Calu3 (cell line): ENCODE measurements at regions of chr7 and their contacts with region 1.

Region 1: DNA sequence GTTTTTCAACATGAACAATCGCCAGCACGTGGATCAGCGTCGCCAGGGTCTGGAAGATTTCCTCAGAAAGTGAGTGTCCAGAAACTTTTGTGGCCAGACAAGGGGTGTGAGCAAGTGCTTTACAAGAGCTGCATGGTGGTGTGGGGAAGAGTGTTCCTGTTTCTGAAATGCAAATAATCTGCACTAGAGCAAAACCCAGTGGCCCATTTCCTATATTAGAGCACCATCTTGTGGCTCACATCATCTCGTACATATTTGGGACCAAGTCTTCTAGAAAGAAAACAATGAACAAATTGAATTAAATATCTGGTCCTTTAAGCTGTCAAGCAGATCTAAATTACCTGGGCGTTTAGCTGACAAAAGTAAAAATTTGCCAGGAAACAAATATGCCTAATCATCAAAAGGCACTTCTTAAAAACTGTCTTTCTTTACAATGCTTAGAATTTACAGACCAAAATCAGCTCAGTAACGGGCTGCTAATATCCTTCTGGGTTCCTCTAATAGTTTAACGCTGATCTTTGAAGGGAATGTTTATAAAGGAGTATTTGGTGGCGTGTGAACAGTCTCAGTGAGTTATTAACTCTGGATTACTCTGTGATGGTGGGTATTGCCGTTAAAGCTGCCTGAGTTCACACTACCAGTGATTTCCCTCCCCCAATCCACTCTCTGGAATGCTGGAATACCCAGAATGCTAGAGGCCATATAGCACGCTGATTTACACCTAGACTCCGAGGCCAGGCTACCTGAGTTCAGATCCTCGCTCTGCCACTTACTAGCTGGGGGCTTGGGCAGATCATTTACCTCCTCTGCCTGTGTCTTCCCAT is 73.6 kb downstream of the SNX10 start:
- DNase-seq: peak; percentile 73
- H3K4me3 Mint-ChIP-seq: peak overlapping the region; percentile 10
- H3K27ac Mint-ChIP-seq: peak overlapping the region; percentile 54
- H3K4me1 Mint-ChIP-seq: peaks cover 44% of the 10 kb centered on the region
- H3K27me3 Mint-ChIP-seq: no peaks in the 10 kb centered on the region
- CTCF ChIP-seq: peak; percentile 85

Region 2: DNA sequence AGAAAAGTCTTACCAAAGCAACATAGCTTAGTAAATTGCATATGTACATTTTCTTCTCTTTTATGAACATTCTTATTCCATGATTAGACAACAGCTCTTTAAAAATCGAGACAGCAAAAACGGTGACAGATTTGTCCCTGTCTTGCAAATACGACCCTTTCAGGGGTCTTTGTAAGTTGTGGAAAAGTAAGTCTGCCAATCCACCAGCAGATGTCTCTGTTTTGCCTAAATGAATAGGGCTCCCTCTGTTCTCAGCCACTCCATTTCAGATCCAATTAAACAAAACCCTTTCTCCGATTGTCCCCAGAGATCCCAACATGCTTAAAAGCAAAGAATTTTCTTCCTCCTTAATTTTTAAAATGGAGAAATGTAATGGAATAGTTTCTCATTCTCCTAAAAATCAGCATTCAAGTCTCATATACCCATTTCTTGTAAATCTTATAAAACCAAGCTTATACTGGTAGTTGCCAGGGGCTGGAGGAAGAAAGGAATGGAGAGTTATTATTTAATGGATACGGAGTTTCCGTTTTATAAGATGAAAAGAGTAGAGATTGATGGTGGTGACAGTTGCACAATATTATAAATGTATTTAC is 274.3 kb before region 1 on chr7:
- CTCF ChIA-PET with region 1: interaction called, 9 read pairs
- intact Hi-C with region 1: loop called (anchors 1 kb)
- DNase-seq: peak; percentile 27
- H3K4me3 Mint-ChIP-seq: no peak overlapping the region
- H3K27ac Mint-ChIP-seq: no peak overlapping the region
- H3K4me1 Mint-ChIP-seq: peaks cover 23% of the 10 kb centered on the region
- H3K27me3 Mint-ChIP-seq: no peaks in the 10 kb centered on the region
- CTCF ChIP-seq: peak; percentile 87

Region 3: DNA sequence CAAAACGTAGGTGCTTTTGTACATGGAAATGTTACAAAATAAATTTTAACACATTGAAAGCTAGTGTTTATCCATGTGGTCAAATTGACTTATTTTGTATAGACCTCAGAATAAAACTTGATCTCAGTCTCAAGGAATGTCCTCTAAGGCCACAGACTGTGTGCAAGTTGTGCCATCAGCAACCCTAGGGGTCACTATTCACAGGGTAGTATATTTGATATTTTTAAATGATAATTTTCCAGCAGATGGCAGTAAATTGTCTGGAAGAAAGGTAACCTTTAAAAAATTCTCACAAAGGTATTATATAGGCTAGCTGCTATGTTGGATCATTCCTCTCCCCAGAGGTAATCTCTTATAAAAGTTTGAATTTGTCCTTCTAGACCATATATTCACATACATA is 86.5 kb before region 1 on chr7:
- CTCF ChIA-PET with region 1: interaction called, 7 read pairs
- intact Hi-C with region 1: loop called (anchors 1 kb)
- DNase-seq: peak; percentile 13
- H3K4me3 Mint-ChIP-seq: no peak overlapping the region
- H3K27ac Mint-ChIP-seq: no peak overlapping the region
- H3K4me1 Mint-ChIP-seq: no peaks in the 10 kb centered on the region
- H3K27me3 Mint-ChIP-seq: no peaks in the 10 kb centered on the region
- CTCF ChIP-seq: peak; percentile 57

Region 4: GRCh38 chr7:26398756-26399501 is 33.6 kb after region 1 on chr7:
- CTCF ChIA-PET with region 1: interaction called, 11 read pairs
- intact Hi-C with region 1: no loop called
- DNase-seq: peak; percentile 72
- H3K4me3 Mint-ChIP-seq: peak overlapping the region; percentile 92
- H3K27ac Mint-ChIP-seq: peak overlapping the region; percentile 72
- H3K4me1 Mint-ChIP-seq: peaks cover 38% of the 10 kb centered on the region
- H3K27me3 Mint-ChIP-seq: no peaks in the 10 kb centered on the region
- CTCF ChIP-seq: no peak

Region 5: GRCh38 chr7:26508481-26508880 is 143.2 kb after region 1 on chr7:
- CTCF ChIA-PET with region 1: interaction called, 11 read pairs
- intact Hi-C with region 1: no loop called
- DNase-seq: peak; percentile 92
- H3K4me3 Mint-ChIP-seq: peak overlapping the region; percentile 75
- H3K27ac Mint-ChIP-seq: peak overlapping the region; percentile 96
- H3K4me1 Mint-ChIP-seq: peaks cover 26% of the 10 kb centered on the region
- H3K27me3 Mint-ChIP-seq: no peaks in the 10 kb centered on the region
- CTCF ChIP-seq: no peak

Region 6: GRCh38 chr7:26657686-26658396 is 292.6 kb after region 1 on chr7:
- CTCF ChIA-PET with region 1: interaction called, 12 read pairs
- intact Hi-C with region 1: no loop called
- DNase-seq: no peak
- H3K4me3 Mint-ChIP-seq: no peak overlapping the region
- H3K27ac Mint-ChIP-seq: no peak overlapping the region
- H3K4me1 Mint-ChIP-seq: peaks cover 34% of the 10 kb centered on the region
- H3K27me3 Mint-ChIP-seq: no peaks in the 10 kb centered on the region
- CTCF ChIP-seq: no peak

Region 7: GRCh38 chr7:27160546-27161213 is 795.4 kb after region 1 on chr7:
- CTCF ChIA-PET with region 1: interaction called, 34 read pairs
- intact Hi-C with region 1: loop called (anchors 2 kb)
- DNase-seq: peak; percentile 94
- H3K4me3 Mint-ChIP-seq: peak overlapping the region; percentile 76
- H3K27ac Mint-ChIP-seq: no peak overlapping the region
- H3K4me1 Mint-ChIP-seq: no peaks in the 10 kb centered on the region
- H3K27me3 Mint-ChIP-seq: no peaks in the 10 kb centered on the region
- CTCF ChIP-seq: peak; percentile 100